Mammary epithelial cell (primary cell): ENCODE measurements at regions of chr1 and their contacts with region 1.

Region 1: DNA sequence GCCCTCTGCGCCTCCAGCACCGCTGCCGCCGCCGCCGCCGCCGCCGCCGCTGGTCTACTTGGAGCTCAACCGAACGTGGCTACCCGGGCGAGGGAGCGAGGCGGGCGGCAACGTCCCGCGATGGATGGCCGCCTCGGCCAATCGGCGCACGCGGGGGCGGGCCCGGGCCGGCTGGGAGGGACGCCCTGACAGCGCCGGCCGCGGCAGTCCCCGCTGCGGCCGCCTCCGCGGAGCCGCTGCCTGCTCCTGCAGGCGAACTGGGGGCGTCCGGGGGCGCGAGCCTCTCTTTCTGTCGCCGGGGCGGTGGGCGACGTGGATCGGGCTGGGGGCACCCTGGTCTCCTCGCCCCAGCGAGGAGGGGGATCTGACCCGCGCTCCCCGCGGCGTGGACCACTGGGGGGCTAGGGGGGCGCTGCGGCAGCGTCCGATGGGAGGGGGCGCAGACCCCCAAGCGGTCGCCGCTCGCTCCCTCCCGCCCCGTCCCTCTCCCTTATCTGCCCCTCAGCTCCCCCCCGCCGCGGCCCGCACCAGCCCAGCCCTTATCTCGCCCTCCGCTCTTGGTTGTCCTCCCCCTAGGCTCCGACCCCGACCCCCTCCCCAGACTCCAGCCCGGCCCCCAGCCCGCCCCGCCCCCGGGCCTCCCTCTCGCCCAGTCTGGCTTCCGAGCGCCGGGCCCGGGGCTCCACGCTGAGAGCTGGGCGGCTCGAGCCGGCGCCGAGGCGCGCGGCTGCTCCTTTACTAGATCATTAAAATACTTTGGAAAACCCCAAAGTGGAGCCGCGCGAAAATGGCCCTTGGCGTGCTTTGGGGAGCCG is at the start of gene SSBP3:
- DNase-seq: peak; percentile 95
- H3K4me3 ChIP-seq: peak within 1 kb of the TSS; percentile 60 to 86 (median 64)
- H3K27ac ChIP-seq: peak within 1 kb of the TSS; percentile 84
- H3K4me1 ChIP-seq: peaks cover 49% of the 10 kb centered on the region
- H3K27me3 ChIP-seq: no peaks in the 10 kb centered on the region
- CTCF ChIP-seq: peak in 1 of 2 donors; percentile 2
- total RNA-seq, gene SSBP3: 30.5 to 30.6 TPM

Region 2: DNA sequence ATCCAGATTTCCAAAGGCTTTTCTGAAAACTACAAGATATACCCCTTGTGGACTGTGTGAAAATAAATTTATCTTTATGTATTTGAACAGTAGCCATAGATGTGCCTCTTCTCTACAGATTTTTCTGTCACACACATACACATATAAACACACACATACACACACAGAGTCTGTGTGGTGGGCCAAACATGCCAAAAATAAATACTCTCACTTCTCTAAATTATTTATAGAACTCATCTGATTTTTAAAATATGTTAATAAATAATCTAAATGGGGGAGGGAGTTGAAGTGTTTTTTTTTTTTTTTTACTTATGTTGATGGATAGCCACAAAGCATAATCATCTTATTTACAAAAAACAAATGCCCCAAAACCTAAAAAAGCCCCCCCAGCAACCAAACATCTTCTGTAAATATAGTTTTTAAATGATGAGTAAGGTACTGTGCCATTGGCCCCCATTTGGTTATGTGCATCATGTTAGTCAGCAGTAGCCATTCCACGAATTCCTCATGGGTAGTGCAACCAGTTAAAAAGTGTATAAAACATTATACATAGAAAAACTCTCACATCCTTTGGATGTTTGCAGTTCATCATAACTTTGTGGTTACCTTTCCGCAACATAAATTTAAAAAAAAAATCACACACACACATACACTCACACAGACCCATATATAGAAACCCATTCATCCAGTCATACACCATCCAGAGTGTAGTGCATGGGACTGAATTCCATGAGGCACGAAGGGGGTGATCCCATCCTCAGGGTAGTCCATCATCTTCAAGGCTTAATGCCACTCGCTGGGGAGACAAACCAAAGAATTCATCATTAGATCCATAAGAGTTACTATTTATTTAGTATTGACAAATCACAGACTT is 1160.0 kb before region 1 on chr1:
- CTCF ChIA-PET with region 1: no interaction called
- dilution Hi-C with region 1: no loop called
- in situ Hi-C with region 1: no loop called
- intact Hi-C with region 1: no loop called
- DNase-seq: no peak
- H3K4me3 ChIP-seq: no peak overlapping the region
- H3K27ac ChIP-seq: no peak overlapping the region
- H3K4me1 ChIP-seq: no peaks in the 10 kb centered on the region
- H3K27me3 ChIP-seq: no peaks in the 10 kb centered on the region
- CTCF ChIP-seq: no peak

Region 3: DNA sequence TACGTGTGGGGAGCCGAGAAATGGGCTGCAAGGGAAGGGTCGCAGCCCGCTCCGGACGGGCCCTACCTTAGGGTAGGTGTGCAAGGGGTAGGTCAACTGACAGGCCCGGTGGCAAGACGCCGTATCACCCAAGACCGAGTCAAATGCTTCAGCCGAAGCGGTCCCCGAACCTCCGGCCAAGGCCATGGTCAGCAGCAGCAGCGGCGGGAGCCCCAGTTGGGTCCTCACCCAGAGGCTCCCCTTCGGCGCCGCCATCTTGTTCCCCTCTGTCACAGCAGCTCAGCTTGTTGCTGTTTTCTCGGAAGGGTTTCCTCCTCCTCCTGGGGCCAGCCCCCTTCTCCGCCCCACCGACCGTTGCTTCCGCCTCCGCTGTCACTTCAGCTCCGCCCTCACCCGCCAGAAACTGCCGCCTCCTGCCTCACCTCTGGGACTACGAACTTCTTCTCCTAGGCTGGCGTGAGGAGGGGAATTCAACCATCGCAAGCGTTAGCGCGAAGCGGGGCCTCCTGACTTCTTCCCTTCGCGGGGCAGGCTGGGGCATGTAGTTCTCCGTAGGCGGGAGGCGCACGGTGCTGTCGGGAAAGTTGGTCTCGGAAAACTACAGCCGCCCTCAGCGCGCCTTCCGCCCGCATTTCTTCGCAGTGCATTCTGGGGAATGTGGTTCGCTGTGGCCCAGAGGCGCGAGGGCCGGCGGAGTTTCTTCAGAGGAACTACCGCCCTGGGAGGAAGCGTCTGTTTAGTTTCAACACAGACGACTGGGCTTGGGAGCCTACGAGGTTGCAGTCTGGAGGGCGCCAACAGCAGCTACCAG is 353.4 kb before region 1 on chr1 and contains the starts of genes TCEANC2 and TMEM59:
- CTCF ChIA-PET with region 1: no interaction called
- dilution Hi-C with region 1: no loop called
- in situ Hi-C with region 1: no loop called
- intact Hi-C with region 1: loop called (anchors 5 kb)
- DNase-seq: peak; percentile 100
- H3K4me3 ChIP-seq: peak within 1 kb of the TSS; percentile 82 to 90 (median 89)
- H3K27ac ChIP-seq: peak within 1 kb of the TSS; percentile 91
- H3K4me1 ChIP-seq: peaks cover 6% of the 10 kb centered on the region
- H3K27me3 ChIP-seq: no peaks in the 10 kb centered on the region
- CTCF ChIP-seq: no peak
- total RNA-seq, gene TCEANC2: 3.8 to 5.5 TPM
- total RNA-seq, gene TMEM59: 164 to 223 TPM

Region 4: DNA sequence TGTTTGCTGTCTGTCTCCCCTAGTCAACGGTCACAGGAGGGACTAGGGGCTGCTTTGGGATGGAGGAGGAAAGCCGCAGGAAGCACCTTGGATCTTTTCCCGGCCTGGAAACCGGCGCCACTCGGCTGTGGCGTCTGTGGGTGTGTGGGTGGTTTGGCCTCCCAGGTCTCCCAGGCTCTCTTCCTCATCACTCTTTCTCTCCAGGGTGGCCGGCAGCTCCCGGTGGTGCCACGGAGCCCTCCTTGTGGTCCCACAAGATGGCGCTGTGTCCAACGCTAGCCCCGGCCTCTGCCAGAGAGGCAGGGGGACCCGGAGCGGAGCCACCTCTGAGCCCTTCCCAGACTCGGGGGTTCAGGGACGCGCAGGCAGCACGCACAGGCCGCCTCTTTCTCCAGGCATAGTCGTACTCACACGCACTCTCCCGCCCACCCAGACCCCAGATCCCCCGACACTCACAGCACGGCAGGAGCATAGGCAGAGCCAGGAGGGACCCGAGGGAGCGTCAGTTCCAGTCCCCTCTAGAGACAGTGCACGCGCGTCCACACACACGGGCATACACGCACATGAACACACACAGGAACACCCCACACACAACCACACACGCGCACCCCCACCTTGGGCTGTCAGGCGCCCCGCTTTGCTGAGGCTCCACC is 284.9 kb before region 1 on chr1:
- CTCF ChIA-PET with region 1: no interaction called
- dilution Hi-C with region 1: no loop called
- in situ Hi-C with region 1: no loop called
- intact Hi-C with region 1: loop called (anchors 1 kb)
- DNase-seq: peak; percentile 44
- H3K4me3 ChIP-seq: peak overlapping the region in 2 of 3 experiments; percentile 6 to 22
- H3K27ac ChIP-seq: no peak overlapping the region
- H3K4me1 ChIP-seq: peaks cover 8% of the 10 kb centered on the region
- H3K27me3 ChIP-seq: no peaks in the 10 kb centered on the region
- CTCF ChIP-seq: peak; percentile 57 to 79

Region 5: GRCh38 chr1:54227091-54227602 is 179.4 kb before region 1 on chr1:
- CTCF ChIA-PET with region 1: no interaction called
- dilution Hi-C with region 1: no loop called
- in situ Hi-C with region 1: no loop called
- intact Hi-C with region 1: loop called (anchors 10 kb)
- DNase-seq: peak; percentile 7
- H3K4me3 ChIP-seq: no peak overlapping the region
- H3K27ac ChIP-seq: no peak overlapping the region
- H3K4me1 ChIP-seq: peaks cover 12% of the 10 kb centered on the region
- H3K27me3 ChIP-seq: no peaks in the 10 kb centered on the region
- CTCF ChIP-seq: no peak

Region 6: DNA sequence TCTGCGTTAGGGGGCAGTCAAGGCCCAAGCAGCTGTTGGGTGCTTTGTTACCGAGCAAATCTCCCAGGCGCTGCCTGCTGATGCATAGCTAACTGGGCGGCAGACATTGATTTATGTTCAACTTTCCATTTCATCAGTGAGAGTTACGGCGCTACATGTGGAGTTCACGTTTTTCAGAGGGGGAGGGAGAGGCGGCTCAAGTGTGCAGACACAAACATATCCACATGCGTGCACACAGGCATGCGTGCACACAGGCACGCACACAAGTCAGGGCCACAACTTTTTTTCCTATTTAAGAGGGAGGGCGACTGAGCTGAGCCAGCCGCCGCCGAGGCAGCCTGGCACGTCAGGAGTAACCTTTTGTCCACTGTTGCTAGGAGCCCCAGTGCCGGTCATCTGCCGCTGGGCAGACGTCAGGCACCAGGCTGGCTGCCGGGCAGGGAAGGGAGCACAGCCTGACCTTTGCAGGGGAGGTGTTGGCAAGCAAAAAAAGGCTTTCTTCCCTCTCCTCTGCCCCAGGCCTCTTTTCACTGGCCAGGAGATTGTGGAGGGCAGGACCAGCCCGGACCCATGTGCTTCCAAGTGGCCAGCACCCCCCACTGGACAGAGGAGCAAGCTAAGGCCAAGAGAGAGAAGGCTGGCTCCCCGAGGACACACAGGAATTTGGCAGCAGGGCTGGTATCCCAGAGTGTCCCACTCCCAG is 133.3 kb before region 1 on chr1:
- CTCF ChIA-PET with region 1: no interaction called
- dilution Hi-C with region 1: no loop called
- in situ Hi-C with region 1: no loop called
- intact Hi-C with region 1: loop called (anchors 10 kb)
- DNase-seq: no peak
- H3K4me3 ChIP-seq: no peak overlapping the region
- H3K27ac ChIP-seq: no peak overlapping the region
- H3K4me1 ChIP-seq: peaks cover 20% of the 10 kb centered on the region
- H3K27me3 ChIP-seq: no peaks in the 10 kb centered on the region
- CTCF ChIP-seq: no peak

Region 7: GRCh38 chr1:54323324-54323739 is 83.2 kb before region 1 on chr1:
- CTCF ChIA-PET with region 1: no interaction called
- dilution Hi-C with region 1: loop called (anchors 5 kb)
- in situ Hi-C with region 1: no loop called
- intact Hi-C with region 1: loop called (anchors 1 kb)
- DNase-seq: peak; percentile 94
- H3K4me3 ChIP-seq: no peak overlapping the region
- H3K27ac ChIP-seq: peak overlapping the region; percentile 60
- H3K4me1 ChIP-seq: peaks cover 40% of the 10 kb centered on the region
- H3K27me3 ChIP-seq: no peaks in the 10 kb centered on the region
- CTCF ChIP-seq: peak; percentile 36 to 69